Prostate gland (tissue), 2 donors: ENCODE measurements at regions of chr6 and their contacts with region 1.

Region 1: DNA sequence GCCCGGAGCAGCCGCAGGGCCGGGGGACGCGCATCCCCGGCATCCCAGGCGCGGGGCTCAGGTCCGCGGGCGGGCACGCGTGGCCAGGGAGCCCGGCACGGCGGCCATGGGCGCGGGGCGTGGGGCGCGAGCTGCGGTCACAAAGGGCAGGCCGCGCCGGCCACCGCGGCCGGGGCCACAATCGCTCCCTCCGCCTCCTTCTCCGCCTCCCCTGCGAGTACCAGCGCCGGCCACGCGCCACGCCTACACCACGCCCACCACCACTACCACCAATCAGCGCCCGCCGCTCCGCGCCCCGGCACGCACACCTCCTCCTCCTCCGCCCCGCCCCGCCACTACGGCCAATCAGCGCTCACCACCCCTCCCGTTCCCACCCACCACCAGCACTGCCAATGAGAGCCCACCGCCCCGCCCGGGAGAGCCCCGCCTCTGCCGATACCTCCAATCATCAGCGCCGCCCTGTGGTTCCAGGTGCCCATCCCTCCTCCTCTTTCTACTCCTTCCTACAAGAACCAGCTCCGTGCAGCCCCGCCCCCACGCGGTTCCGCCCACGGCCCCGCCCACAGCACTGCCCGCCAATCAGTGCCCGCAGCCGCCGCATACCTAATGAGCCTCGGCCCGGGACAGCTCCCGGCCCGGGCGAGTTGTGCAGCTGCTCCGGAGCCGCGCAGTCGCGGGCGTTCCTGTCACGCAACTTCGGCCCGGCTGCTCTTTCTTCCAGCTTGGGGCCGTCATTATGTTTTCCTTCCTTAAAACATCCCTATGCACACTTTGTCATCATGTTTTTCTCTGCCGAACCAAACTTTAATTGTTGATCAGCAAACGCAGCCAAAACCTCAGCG is at the start of gene RPS6KA2:
- DNase-seq: peak; percentile 100
- H3K4me3 ChIP-seq: peak within 1 kb of the TSS; percentile 81 to 96
- H3K27ac ChIP-seq: peak within 1 kb of the TSS; percentile 82 to 85
- H3K4me1 ChIP-seq: peaks cover 9% of the 10 kb centered on the region
- H3K27me3 ChIP-seq: no peaks in the 10 kb centered on the region
- CTCF ChIP-seq: peak in 3 of 4 experiments; percentile 20 to 61 (median 29)
- POLR2A ChIP-seq: peak; percentile 88
- total RNA-seq, gene RPS6KA2: 32.2 to 44.3 TPM

Region 2: GRCh38 chr6:166023273-166023989 is 603.8 kb before region 1 on chr6:
- intact Hi-C with region 1: no loop called
- DNase-seq: no peak
- H3K4me3 ChIP-seq: no peak overlapping the region
- H3K27ac ChIP-seq: no peak overlapping the region
- H3K4me1 ChIP-seq: no peaks in the 10 kb centered on the region
- H3K27me3 ChIP-seq: peaks cover 3% of the 10 kb centered on the region
- CTCF ChIP-seq: no peak
- POLR2A ChIP-seq: no peak

Region 3: GRCh38 chr6:166382933-166383801 is 244.1 kb before region 1 on chr6 and contains the start of gene MPC1:
- intact Hi-C with region 1: loop called (anchors 5 kb)
- DNase-seq: peak; percentile 96
- H3K4me3 ChIP-seq: peak within 1 kb of the TSS; percentile 82 to 86
- H3K27ac ChIP-seq: peak within 1 kb of the TSS; percentile 89 to 92
- H3K4me1 ChIP-seq: no peaks in the 10 kb centered on the region
- H3K27me3 ChIP-seq: no peaks in the 10 kb centered on the region
- CTCF ChIP-seq: peak in 1 of 4 experiments; percentile 14
- POLR2A ChIP-seq: peak; percentile 70
- total RNA-seq, gene MPC1: 25.3 to 58.9 TPM

Region 4: DNA sequence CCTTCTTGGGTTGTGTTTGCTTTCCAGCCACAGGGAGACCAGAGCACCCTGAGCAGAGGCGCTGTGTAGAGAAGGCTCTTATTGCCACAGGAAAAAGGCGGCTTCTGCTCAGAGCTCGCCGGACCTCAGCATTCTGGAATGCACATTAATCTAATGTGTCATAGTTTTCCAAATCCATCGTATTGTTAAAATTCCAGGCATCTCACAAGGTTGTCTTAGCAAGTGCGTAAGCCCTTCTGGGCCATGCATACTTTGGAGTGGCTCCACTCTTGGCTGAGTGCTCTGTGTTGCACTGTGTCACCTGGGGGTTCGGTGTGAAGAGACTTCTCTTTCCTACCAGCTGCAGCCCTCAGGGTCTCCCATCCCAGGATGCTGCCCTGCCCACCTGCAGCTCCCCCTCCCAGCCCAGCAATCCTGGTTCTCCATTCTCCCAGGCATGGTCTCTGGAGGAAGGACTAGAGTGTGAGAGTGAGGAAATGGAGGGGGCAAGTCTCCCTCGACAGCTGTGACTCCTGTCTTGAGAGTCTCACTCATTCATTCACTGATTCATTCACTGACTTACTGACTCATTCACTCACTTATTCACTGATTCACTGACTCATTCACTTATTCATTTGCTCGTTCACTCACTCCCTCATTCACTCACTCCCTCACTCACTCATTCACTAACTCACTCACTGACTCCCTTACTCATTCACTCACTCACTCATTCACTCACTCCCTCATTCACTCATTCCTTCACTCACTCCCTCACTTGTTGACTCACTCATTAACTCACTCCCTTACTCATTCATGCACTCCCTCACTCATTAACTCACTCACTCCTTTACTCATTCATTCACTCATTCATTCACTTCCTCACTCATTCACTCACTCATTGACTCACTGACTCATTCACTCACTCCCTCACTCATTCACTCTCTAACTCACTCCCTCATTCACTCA is 160.8 kb before region 1 on chr6:
- intact Hi-C with region 1: loop called (anchors 10 kb)
- DNase-seq: no peak
- H3K4me3 ChIP-seq: no peak overlapping the region
- H3K27ac ChIP-seq: no peak overlapping the region
- H3K4me1 ChIP-seq: no peaks in the 10 kb centered on the region
- H3K27me3 ChIP-seq: no peaks in the 10 kb centered on the region
- CTCF ChIP-seq: no peak
- POLR2A ChIP-seq: no peak

Region 5: DNA sequence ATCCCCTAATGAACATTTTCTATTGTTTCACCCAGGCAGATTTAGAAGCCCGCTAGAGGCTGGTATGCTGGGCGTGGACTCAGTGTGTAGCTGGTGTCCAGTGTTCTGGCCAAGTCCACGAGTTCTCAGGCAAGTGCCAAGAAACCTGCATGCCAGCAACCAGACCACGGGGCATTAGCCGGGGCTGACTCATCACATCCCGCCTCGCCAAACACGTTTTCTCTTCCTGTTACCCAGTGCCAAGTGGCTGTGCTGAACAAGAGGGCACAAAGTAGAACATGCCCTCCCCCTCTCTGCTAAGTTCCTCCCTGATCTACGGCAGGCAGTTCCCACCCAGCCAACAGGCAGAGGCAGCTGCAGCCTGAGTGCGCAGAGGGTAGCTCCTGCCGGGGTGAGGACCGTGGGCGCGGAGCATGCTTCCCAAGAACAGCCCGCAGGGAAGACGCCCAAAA is 70.4 kb before region 1 on chr6:
- intact Hi-C with region 1: loop called (anchors 5 kb)
- DNase-seq: peak; percentile 98
- H3K4me3 ChIP-seq: peak overlapping the region in 1 of 2 donors; percentile 19
- H3K27ac ChIP-seq: peak overlapping the region; percentile 74 to 81
- H3K4me1 ChIP-seq: no peaks in the 10 kb centered on the region
- H3K27me3 ChIP-seq: no peaks in the 10 kb centered on the region
- CTCF ChIP-seq: peak in 1 of 4 experiments; percentile 17
- POLR2A ChIP-seq: peak; percentile 69